Posterior cingulate gyrus (tissue), 11 donors: ENCODE measurements at regions of chr4 and their contacts with region 1.

Region 1: DNA sequence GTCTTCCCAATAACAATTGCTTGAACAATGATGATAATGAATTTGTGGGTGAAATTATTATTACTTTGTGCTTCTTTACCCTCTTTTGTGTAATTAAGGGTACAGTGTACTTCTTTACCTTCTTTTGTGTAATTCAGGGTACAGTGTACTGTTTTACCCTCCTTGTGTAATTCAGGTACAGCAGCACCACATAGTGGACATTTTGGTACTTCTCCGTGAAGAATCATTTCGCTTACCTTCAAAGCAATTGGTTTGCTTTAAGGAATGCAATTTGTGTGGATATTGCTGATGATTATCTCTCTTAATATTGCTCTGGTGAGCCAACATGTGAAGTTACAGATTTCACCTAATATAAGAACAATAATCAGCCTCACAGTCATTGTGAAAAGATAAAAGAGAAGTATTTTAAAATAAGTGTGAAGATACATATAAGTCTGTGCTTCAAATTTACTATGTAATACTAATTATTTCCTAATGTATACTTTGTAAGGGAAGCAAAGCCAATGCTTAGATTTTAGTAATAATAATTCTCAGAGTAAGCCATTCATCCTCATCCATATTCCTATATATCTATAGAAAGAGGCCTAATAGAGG is 27.2 kb upstream of the SEC24B start:
- DNase-seq: peak in 1 of 10 donors; percentile 16

Region 2: GRCh38 chr4:108683479-108683878 is 723.0 kb before region 1 on chr4:
- intact Hi-C with region 1: loop called (anchors 5 kb)
- DNase-seq: no peak

Region 3: GRCh38 chr4:108834835-108835384 is 571.5 kb before region 1 on chr4:
- intact Hi-C with region 1: loop called (anchors 2 kb)
- DNase-seq: no peak